Activated B cell treated with CpG ODN at 0.5 μM for 24 hours (primary cell): ENCODE measurements at regions of chr6 and their contacts with region 1.

Region 1: GRCh38 chr6:139881728-139882211 is 507.3 kb upstream of the CITED2 start:
- DNase-seq: no peak
- ATAC-seq: peak; percentile 42
- H3K4me3 Mint-ChIP-seq: no peak overlapping the region
- H3K27ac Mint-ChIP-seq: no peak overlapping the region
- H3K4me1 Mint-ChIP-seq: peaks cover 23% of the 10 kb centered on the region
- H3K27me3 Mint-ChIP-seq: no peaks in the 10 kb centered on the region
- CTCF ChIP-seq: no peak

Region 2: GRCh38 chr6:139863346-139863745 is 18.4 kb before region 1 on chr6:
- CTCF ChIA-PET with region 1: no interaction called
- POLR2A ChIA-PET with region 1: no interaction called
- intact Hi-C with region 1: no loop called
- DNase-seq: no peak
- ATAC-seq: no peak
- H3K4me3 Mint-ChIP-seq: no peak overlapping the region
- H3K27ac Mint-ChIP-seq: no peak overlapping the region
- H3K4me1 Mint-ChIP-seq: no peaks in the 10 kb centered on the region
- H3K27me3 Mint-ChIP-seq: no peaks in the 10 kb centered on the region
- CTCF ChIP-seq: no peak

Region 3: DNA sequence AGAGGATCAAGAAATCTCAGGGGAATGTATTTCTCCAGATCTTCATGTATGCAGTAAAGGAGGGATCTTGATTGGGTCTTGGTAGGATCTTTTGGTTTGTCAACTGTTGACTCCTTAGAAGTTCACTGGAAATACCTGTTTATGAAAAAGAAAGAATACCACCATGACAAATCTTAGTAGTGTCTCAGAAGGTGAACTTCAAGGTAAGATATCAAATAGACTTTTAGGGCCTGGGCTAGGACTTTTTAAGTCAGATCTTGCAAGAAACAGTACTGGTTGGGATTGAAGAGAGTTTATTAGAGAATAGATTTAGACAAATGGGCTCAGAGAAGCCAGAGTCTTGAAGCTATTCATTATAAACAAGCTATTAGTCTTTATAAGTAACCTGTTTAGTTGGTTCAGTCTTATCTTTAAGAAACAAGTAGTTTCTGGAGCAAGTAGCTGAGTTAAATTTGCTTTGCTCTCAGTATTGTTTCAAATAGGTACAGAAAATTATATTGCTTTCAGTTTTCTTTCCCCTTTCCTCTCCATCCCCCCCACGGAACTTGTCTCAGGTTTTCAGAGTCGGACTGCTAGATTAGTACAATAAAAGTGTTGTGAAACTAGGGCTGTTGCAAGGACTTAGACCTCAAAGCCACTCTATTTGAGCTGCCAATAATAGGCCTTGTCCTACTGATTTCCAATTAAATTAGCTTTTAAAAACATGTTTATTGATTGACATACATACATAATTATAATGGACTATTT is 21.8 kb after region 1 on chr6:
- CTCF ChIA-PET with region 1: no interaction called
- POLR2A ChIA-PET with region 1: no interaction called
- intact Hi-C with region 1: loop called (anchors 2 kb)
- DNase-seq: no peak
- ATAC-seq: peak; percentile 67
- H3K4me3 Mint-ChIP-seq: no peak overlapping the region
- H3K27ac Mint-ChIP-seq: peak overlapping the region; percentile 78
- H3K4me1 Mint-ChIP-seq: peaks cover 17% of the 10 kb centered on the region
- H3K27me3 Mint-ChIP-seq: peaks cover 5% of the 10 kb centered on the region
- CTCF ChIP-seq: no peak

Region 4: GRCh38 chr6:139996253-139996834 is 114.6 kb after region 1 on chr6:
- CTCF ChIA-PET with region 1: no interaction called
- POLR2A ChIA-PET with region 1: no interaction called
- intact Hi-C with region 1: loop called (anchors 1 kb)
- DNase-seq: no peak
- ATAC-seq: peak; percentile 42
- H3K4me3 Mint-ChIP-seq: no peak overlapping the region
- H3K27ac Mint-ChIP-seq: no peak overlapping the region
- H3K4me1 Mint-ChIP-seq: no peaks in the 10 kb centered on the region
- H3K27me3 Mint-ChIP-seq: no peaks in the 10 kb centered on the region
- CTCF ChIP-seq: no peak

Region 5: DNA sequence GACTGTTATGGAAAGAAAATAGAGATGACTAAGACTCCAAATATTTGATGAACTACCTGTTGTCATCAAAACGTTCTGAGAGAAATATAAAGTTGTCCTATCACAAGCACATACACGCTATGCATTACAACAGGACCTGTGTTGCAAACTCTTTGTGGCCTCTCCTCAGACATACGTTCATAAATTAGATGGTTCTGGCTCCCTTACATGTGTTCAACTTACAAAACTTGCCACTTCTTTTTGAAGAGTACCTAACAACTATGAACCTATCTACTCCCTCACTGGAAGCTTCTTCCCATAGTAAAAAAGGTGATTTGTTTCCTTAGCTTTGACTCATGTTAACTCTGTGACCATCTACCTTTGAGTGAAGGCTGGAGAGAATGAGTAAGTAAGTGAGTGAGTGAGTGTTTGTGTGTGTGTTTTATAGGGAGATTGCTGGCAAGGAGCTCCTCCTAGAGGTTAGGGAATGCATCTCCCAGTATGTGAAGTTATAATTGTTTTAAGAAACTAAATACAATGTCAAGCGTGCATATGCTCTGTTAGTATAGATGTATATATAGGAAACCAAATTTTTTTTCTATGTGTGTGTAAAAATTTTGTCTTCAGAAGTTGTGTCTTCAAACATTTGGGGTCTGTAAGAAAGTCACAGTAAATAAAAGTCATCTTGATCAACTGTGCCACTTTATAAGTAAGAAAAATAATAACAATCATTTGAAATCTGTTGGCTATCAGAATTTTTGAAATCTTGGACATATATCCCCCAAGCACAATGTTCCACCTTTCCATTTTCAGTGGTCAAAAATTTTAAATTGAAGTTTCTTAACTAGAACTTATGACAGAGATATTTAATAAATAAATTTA is 1039.8 kb after region 1 on chr6:
- CTCF ChIA-PET with region 1: no interaction called
- POLR2A ChIA-PET with region 1: no interaction called
- intact Hi-C with region 1: loop called (anchors 5 kb)
- DNase-seq: no peak
- ATAC-seq: no peak
- H3K4me3 Mint-ChIP-seq: no peak overlapping the region
- H3K27ac Mint-ChIP-seq: no peak overlapping the region
- H3K4me1 Mint-ChIP-seq: no peaks in the 10 kb centered on the region
- H3K27me3 Mint-ChIP-seq: no peaks in the 10 kb centered on the region
- CTCF ChIP-seq: no peak